K562 (cell line): ENCODE measurements at regions of chr18 and their contacts with region 1.

Region 1: DNA sequence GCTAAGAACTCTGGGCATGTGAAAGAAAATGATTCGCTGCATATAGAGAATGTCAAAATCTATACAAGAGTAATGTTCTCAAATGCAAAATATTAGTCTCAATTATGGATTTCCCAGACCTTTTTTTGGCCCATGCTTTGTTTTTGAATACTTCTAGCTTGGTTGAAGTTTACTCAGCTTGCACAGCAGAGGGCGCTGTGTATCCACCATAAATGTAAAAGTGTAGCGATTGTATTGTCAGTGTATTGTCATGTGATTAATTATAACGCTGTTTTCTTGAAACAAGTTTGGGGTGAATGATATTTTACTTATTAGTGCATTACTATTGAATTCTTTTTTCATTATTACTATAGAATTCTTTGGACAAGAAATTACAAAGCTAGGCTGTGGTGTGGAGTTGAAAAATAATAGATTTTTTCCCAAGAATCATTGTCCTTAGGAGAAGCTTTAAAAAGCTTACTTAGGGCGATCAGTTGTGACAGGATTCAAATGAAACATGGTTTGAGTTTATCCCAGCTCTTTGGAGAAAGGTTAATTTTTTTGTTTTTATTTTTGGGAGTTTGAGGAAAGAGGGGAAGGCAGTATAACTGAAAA is 98.3 kb downstream of the PIK3C3 start:
- DNase-seq: peak; percentile 20 to 61 (median 26)
- ATAC-seq: peak; percentile 80
- H3K4me3 ChIP-seq: no peak overlapping the region
- H3K27ac ChIP-seq: no peak overlapping the region
- H3K4me1 ChIP-seq: no peaks in the 10 kb centered on the region
- H3K27me3 ChIP-seq: no peaks in the 10 kb centered on the region
- CTCF ChIP-seq: peak; percentile 46 to 61 (median 57); a peak in 5 of 6 replicates
- EP300 ChIP-seq: no peak
- POLR2A ChIP-seq: no peak
- RAD21 ChIP-seq: peak; percentile 51 to 57

Region 2: DNA sequence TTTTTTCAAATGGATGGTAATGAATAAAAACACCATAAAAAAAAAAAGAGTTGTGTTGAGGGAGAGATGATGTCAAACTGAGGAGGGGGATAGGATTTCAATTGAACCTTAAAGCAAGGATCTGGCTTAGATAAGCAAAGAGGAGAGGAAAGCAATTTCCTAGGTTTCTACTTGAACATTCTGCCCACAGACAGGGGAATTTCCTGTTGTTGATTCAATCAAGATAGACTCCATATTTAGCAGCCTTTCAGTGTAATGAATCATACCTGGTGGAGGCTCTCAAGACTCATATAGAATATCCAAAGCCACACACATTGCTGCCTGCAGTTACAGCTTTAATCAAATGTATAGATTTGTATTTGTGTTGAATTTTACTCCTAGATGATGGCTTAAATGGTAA is 392.6 kb before region 1 on chr18:
- CTCF ChIA-PET with region 1: no interaction called
- POLR2A ChIA-PET with region 1: no interaction called
- in situ Hi-C with region 1: no loop called
- intact Hi-C with region 1: no loop called
- DNase-seq: no peak
- ATAC-seq: no peak
- H3K4me3 ChIP-seq: no peak overlapping the region
- H3K27ac ChIP-seq: no peak overlapping the region
- H3K4me1 ChIP-seq: no peaks in the 10 kb centered on the region
- H3K27me3 ChIP-seq: no peaks in the 10 kb centered on the region
- CTCF ChIP-seq: no peak
- EP300 ChIP-seq: no peak
- POLR2A ChIP-seq: no peak
- RAD21 ChIP-seq: no peak

Region 3: GRCh38 chr18:41954827-41955613 is 98.3 kb before region 1 on chr18 and contains the start of gene PIK3C3:
- CTCF ChIA-PET with region 1: no interaction called
- POLR2A ChIA-PET with region 1: no interaction called
- in situ Hi-C with region 1: no loop called
- intact Hi-C with region 1: no loop called
- DNase-seq: peak; percentile 96 to 100 (median 98)
- ATAC-seq: peak; percentile 95
- H3K4me3 ChIP-seq: peak within 1 kb of the TSS; percentile 66
- H3K27ac ChIP-seq: peak within 1 kb of the TSS; percentile 64
- H3K4me1 ChIP-seq: no peaks in the 10 kb centered on the region; a peak in 1 of 5 replicates
- H3K27me3 ChIP-seq: no peaks in the 10 kb centered on the region
- CTCF ChIP-seq: no peak
- EP300 ChIP-seq: no peak
- POLR2A ChIP-seq: peak; percentile 85
- RAD21 ChIP-seq: no peak
- polyA plus RNA-seq, gene PIK3C3: 42.0 to 56.3 TPM

Region 4: GRCh38 chr18:43271593-43272432 is 1218.5 kb after region 1 on chr18:
- CTCF ChIA-PET with region 1: no interaction called
- POLR2A ChIA-PET with region 1: no interaction called
- in situ Hi-C with region 1: loop called (anchors 25 kb)
- intact Hi-C with region 1: loop called (anchors 5 kb)
- DNase-seq: peak; percentile 4 to 34 (median 23)
- ATAC-seq: no peak
- H3K4me3 ChIP-seq: no peak overlapping the region
- H3K27ac ChIP-seq: no peak overlapping the region
- H3K4me1 ChIP-seq: no peaks in the 10 kb centered on the region
- H3K27me3 ChIP-seq: no peaks in the 10 kb centered on the region
- CTCF ChIP-seq: peak; percentile 21 to 58 (median 29); a peak in 2 of 6 replicates
- EP300 ChIP-seq: no peak
- POLR2A ChIP-seq: no peak
- RAD21 ChIP-seq: peak; percentile 51 to 52; a peak in 3 of 4 replicates

Region 5: GRCh38 chr18:43596105-43596712 is 1542.9 kb after region 1 on chr18:
- CTCF ChIA-PET with region 1: no interaction called
- POLR2A ChIA-PET with region 1: no interaction called
- in situ Hi-C with region 1: no loop called
- intact Hi-C with region 1: loop called (anchors 5 kb)
- DNase-seq: peak in 2 of 4 experiments; percentile 1 to 2
- ATAC-seq: peak; percentile 49; the same call in 1 of the 3 replicates
- H3K4me3 ChIP-seq: no peak overlapping the region
- H3K27ac ChIP-seq: no peak overlapping the region
- H3K4me1 ChIP-seq: no peaks in the 10 kb centered on the region
- H3K27me3 ChIP-seq: no peaks in the 10 kb centered on the region
- CTCF ChIP-seq: peak in 1 of 3 experiments; percentile 35; a peak in 2 of 6 replicates
- EP300 ChIP-seq: no peak
- POLR2A ChIP-seq: no peak
- RAD21 ChIP-seq: peak in 1 of 2 experiments; percentile 41; a peak in 3 of 4 replicates